ENCODE measurements at regions of chr9 and their contacts with region 1.

Region 1: GRCh38 chr9:128067876-128068613 is at the start of gene SLC25A25:
- DNase-seq: peak; percentile 100
- ATAC-seq: peak; percentile 79
- H3K4me3 Mint-ChIP-seq: peak within 1 kb of the TSS; percentile 94
- H3K27ac Mint-ChIP-seq: peak within 1 kb of the TSS; percentile 84
- H3K4me1 Mint-ChIP-seq: peaks cover 39% of the 10 kb centered on the region
- H3K27me3 Mint-ChIP-seq: no peaks in the 10 kb centered on the region
- total RNA-seq, gene SLC25A25: 21.2 to 21.8 TPM

Region 2: GRCh38 chr9:128078504-128079434 is 10.7 kb after region 1 on chr9:
- POLR2A ChIA-PET with region 1: interaction called, 22 read pairs
- DNase-seq: no peak
- ATAC-seq: no peak
- H3K4me3 Mint-ChIP-seq: peak overlapping the region; percentile 25
- H3K27ac Mint-ChIP-seq: peak overlapping the region; percentile 14
- H3K4me1 Mint-ChIP-seq: peaks cover 28% of the 10 kb centered on the region
- H3K27me3 Mint-ChIP-seq: no peaks in the 10 kb centered on the region

Region 3: DNA sequence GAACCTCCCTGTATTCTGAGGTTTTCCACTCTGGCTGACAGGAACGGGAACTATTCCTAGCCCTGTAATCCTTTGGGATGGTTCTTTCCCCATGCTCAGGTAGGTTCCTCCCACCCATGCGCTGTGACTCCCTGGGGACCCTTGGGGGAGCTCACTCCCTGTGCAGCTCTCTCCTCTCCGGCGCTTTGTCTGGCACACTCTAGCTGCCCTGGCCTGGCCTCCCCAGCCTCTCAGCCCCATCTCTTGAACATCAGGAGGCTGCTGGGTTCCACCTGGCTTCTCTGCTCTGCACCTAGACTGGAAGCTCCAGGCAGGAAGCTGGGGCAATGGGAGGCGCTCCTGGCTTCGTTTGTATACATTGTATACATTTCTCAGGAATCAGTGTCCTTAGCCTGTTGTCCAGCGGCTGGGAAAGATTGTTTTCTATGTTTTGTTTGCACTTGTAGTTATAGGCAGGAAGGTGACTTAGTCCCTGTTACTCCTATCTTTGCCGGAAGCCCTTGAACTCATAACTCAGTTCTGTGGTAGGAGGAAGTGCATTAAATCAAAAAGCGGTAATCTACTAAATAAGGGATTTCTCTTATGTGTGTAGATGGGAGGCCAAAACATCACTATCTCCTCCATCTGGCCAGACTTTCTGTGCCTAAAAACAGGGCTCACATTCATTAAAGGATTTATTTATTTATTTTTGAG is 20.4 kb after region 1 on chr9:
- POLR2A ChIA-PET with region 1: interaction called, 10 read pairs
- DNase-seq: no peak
- ATAC-seq: peak; percentile 56
- H3K4me3 Mint-ChIP-seq: peak overlapping the region; percentile 37
- H3K27ac Mint-ChIP-seq: peak overlapping the region; percentile 61
- H3K4me1 Mint-ChIP-seq: peaks cover 42% of the 10 kb centered on the region
- H3K27me3 Mint-ChIP-seq: no peaks in the 10 kb centered on the region